Activated CD4-positive, alpha-beta memory T cell treated with anti-CD3 and anti-CD28 coated beads for 36 hours (primary cell): ENCODE measurements at regions of chr1 and their contacts with region 1.

Region 1: DNA sequence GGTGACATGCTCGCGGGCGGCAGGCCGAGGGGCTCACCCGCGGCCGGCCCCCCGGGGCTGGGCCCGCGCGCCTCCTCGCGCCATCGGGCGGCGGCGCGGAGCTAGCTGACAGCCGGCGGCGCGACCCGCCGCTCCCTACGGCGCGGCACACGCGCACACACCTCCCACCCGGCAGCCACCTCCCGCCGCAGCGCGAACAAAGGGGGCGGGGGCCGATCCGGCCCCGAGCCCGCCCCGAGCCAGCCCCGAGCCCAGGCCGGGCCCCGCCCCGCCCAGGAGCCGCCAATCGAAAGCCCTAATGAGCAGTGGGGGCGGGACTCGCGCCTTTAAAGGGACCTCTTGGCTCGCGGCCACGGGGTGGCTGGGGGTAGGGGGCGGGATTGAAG is at the start of gene KIF21B:
- DNase-seq: peak; percentile 93
- H3K4me3 Mint-ChIP-seq: peak within 1 kb of the TSS; percentile 98
- H3K27ac Mint-ChIP-seq: peak within 1 kb of the TSS; percentile 99
- H3K4me1 Mint-ChIP-seq: peaks cover 81% of the 10 kb centered on the region
- H3K27me3 Mint-ChIP-seq: no peaks in the 10 kb centered on the region
- total RNA-seq, gene KIF21B: 56.6 to 58.7 TPM

Region 2: DNA sequence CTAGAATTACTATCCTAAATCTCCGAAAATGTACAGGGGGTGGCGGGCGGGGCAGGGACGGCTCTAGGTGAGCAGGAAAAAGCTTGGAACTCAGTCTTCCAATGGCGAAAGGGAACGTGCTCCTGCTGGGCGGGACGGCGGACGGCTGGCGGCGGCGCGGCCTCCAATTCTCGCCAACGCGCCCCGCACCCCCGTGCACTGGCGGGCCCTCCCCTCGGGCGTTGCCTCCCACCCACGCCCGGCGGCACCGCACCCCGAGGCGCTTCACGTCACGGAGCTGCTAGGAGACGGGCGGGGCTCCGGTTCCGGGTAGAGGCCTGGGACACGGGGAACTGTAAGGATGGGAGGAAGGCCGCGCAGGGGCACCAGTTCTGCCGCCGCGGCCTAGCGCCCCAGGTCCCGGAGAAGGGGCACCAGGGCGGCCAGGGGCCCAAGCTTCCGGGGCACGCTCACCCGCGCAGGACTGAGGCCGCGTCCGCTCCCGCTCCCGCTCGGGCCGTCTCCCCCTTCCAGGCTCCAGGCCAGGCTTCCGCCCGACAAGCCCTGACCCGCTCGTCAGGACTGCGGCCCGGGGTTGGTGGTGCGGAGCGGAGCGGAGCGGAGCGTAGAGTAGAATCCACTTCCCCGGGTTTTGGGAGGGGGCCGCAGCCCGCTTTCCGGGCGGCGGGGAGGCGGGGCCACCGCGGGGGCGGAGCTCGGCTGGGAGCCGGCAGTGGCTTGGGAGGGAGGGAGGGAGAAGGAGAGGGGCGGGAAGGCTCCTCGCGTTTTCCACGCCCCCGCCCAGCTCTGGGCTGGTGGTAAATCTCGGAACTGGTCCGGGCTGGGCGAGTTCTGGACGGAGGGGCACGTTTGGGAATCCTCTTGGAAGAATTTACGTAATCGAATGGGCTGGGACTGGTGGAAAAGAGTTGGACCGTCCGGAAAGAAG is 353.9 kb before region 1 on chr1 and contains the start of gene DDX59:
- CTCF ChIA-PET with region 1: no interaction called
- POLR2A ChIA-PET with region 1: interaction called, 3 read pairs
- intact Hi-C with region 1: loop called (anchors 5 kb)
- DNase-seq: peak; percentile 95
- H3K4me3 Mint-ChIP-seq: peak within 1 kb of the TSS; percentile 92
- H3K27ac Mint-ChIP-seq: peak within 1 kb of the TSS; percentile 95
- H3K4me1 Mint-ChIP-seq: peaks cover 36% of the 10 kb centered on the region
- H3K27me3 Mint-ChIP-seq: no peaks in the 10 kb centered on the region
- total RNA-seq, gene DDX59: 19.4 to 23.4 TPM

Region 3: GRCh38 chr1:200971955-200972711 is 51.4 kb before region 1 on chr1:
- CTCF ChIA-PET with region 1: interaction called, 96 read pairs
- POLR2A ChIA-PET with region 1: no interaction called
- intact Hi-C with region 1: no loop called
- DNase-seq: peak; percentile 68
- H3K4me3 Mint-ChIP-seq: no peak overlapping the region
- H3K27ac Mint-ChIP-seq: no peak overlapping the region
- H3K4me1 Mint-ChIP-seq: no peaks in the 10 kb centered on the region
- H3K27me3 Mint-ChIP-seq: no peaks in the 10 kb centered on the region

Region 4: DNA sequence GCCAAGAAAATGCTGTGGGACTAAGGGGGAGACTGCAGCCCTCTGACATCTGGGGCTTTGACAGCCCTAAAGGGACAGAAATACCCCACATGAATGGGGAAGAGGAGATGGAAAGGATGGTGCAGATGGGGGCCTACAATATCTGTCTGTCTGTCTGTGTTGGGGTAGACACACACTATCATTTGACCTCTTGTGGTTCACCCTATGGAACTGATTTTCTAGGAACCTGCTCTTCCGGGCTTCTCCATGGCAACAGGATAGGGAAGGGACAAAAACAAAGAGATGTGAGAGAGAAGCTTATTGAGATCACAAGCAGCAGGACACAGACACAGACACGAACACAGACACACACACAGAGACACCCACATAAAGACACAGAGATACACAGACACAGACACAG is 17.1 kb before region 1 on chr1:
- CTCF ChIA-PET with region 1: interaction called, 11 read pairs
- POLR2A ChIA-PET with region 1: interaction called, 8 read pairs
- intact Hi-C with region 1: loop called (anchors 2 kb)
- DNase-seq: no peak
- H3K4me3 Mint-ChIP-seq: no peak overlapping the region
- H3K27ac Mint-ChIP-seq: no peak overlapping the region
- H3K4me1 Mint-ChIP-seq: peaks cover 37% of the 10 kb centered on the region
- H3K27me3 Mint-ChIP-seq: no peaks in the 10 kb centered on the region

Region 5: DNA sequence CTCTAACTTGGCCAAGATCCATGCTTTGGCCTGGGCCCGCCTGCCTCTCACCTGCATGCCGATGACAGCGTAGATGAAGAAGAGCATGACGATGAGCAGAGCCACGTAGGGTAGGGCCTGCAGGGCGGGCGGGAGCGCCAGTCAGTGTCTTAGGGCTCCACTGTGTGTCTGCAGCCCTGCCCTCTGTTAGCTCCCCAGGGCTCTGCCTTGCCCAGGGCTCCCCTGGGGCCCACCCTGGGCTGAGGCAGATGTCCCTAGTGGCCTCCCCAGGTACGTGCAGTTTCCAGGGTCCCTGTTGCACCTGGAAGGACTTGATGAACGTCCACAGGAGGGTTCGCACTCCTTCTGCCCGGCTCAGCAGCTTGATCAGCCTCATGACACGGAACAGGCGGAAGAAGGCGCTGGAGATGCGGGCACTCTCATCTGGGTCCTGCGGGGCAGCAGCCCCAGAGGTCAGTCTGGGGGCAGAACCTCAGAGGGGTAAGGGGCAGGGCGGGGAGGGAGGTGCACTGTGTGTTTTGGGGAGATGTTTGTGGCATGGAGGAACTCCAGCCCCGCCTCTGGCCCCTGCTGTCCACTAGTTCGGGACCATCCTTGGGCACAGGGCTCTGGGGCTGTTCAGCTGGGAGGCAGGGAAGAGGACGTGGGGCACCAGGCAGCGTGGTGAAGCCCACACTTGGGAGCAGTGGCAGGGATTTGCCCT is 29.8 kb after region 1 on chr1:
- CTCF ChIA-PET with region 1: interaction called, 3 read pairs
- POLR2A ChIA-PET with region 1: no interaction called
- intact Hi-C with region 1: loop called (anchors 1 kb)
- DNase-seq: no peak
- H3K4me3 Mint-ChIP-seq: no peak overlapping the region
- H3K27ac Mint-ChIP-seq: no peak overlapping the region
- H3K4me1 Mint-ChIP-seq: peaks cover 19% of the 10 kb centered on the region
- H3K27me3 Mint-ChIP-seq: peaks cover 8% of the 10 kb centered on the region

Region 6: DNA sequence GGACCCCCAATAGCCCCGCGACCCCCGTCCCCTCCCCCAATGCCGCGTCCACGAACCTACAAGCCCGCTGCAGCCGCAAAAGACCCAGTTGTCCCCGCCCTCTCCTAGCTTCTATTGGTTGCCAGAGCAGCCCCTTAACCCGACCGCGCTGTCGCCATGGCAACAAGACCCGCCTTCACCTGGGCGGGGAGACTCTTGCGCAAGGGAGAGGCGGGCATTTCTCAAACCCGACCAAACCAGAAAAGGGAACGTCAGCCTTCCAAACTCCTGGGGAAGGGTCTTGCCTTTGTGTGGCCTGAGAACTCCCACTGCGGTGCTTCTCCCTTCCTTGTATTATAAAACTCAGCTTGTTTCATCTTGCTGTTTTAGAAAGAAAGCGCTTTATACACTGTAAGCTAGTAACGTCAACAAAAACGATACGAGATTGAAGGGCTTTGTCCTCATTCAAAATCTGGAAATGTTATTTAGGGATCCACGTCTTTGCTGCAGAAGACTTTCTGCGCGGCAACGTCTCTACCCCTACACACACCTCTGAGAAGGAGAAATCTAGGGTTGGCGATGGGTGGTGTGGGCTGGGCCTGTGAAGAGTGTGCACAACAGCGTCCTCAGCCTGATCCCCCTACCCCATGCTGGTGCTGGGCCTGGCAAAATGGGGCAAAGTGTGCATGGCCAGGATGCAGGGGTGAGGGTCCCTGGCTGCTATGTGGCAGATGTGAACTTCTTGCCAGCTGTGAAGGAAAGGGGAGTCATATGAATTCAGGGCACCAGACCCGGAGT is 131.1 kb after region 1 on chr1 and contains the start of gene TMEM9:
- CTCF ChIA-PET with region 1: no interaction called
- POLR2A ChIA-PET with region 1: no interaction called
- intact Hi-C with region 1: loop called (anchors 5 kb)
- DNase-seq: peak; percentile 98
- H3K4me3 Mint-ChIP-seq: peak within 1 kb of the TSS; percentile 80
- H3K27ac Mint-ChIP-seq: peak within 1 kb of the TSS; percentile 71
- H3K4me1 Mint-ChIP-seq: peaks cover 20% of the 10 kb centered on the region
- H3K27me3 Mint-ChIP-seq: peaks cover 13% of the 10 kb centered on the region
- total RNA-seq, gene TMEM9: 21.7 to 22.5 TPM

Region 7: DNA sequence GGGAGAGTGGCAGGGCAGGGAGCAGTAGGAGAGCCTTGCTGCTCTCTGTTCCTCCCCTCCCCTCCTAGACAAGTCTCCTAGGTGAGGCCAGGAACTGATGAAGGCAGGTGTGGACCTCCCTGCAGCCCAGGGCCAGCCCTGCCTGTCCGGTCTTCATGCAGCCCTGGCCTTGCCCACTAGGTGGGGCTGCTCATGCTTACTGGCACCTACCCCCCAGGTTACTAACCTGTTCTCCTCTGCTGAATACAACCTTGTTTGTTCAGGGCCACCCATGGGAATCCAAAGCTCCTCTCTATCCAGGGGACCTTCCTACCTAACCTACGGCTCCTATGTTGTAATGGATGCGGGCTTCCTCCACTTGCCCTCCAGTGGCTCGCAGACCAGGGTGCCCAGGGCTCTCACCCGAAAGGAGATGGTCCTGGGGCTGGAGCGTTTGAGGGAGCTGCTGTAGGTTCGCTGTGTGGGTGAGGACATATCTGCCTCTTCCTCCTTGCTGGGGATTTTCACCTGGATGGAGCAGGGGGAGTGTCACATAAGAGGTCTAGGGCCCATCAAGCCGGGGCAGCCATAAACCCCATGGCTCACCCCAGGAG is 361.9 kb after region 1 on chr1:
- CTCF ChIA-PET with region 1: no interaction called
- POLR2A ChIA-PET with region 1: no interaction called
- intact Hi-C with region 1: no loop called
- DNase-seq: peak; percentile 63
- H3K4me3 Mint-ChIP-seq: no peak overlapping the region
- H3K27ac Mint-ChIP-seq: no peak overlapping the region
- H3K4me1 Mint-ChIP-seq: no peaks in the 10 kb centered on the region
- H3K27me3 Mint-ChIP-seq: peaks cover 11% of the 10 kb centered on the region

Region 8: GRCh38 chr1:202643397-202644218 is 1620.1 kb after region 1 on chr1:
- CTCF ChIA-PET with region 1: no interaction called
- POLR2A ChIA-PET with region 1: no interaction called
- intact Hi-C with region 1: no loop called
- DNase-seq: peak; percentile 35
- H3K4me3 Mint-ChIP-seq: peak overlapping the region; percentile 36
- H3K27ac Mint-ChIP-seq: no peak overlapping the region
- H3K4me1 Mint-ChIP-seq: peaks cover 17% of the 10 kb centered on the region
- H3K27me3 Mint-ChIP-seq: peaks cover 59% of the 10 kb centered on the region